B cell (primary cell): ENCODE measurements at regions of chr16 and their contacts with region 1.

Region 1: DNA sequence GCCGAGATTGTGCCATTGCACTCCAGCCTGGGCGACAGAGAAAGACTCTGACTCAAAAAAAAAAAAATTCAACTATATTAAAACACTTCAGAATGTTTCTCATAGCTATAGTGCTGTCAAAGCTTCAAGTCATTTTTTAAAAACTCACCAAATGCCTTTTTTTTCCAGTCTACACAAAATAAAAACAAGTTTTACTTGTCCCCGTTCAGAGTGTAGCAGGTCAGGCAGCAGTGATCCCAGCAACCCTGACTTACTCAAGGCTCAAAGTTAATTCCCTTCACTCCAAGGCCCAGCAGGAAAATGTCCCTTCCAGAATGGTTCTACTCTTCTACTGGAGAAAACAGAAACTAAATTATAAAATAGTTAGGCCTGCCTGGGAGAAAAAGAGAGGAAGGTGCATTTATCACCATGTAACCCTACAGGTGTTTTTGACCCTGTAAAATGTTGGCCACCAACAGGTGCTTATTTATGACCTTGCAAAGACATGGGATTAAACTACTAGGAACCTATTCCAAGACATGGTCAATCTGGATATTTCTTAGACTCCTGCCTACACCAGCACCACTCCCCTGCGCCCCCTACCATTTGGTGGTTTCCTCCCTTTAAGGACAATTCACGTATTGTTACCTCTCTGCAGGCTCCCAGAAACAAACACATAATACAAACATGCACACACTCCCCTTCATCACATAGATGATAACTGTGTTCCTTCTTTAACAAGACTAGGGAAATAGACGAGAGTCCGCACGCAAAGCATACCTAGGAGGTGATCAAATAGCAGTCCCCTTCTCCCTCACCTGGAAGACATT is 5.4 kb downstream of the AMFR start:
- DNase-seq: no peak
- ATAC-seq: no peak
- H3K4me3 ChIP-seq: peak overlapping the region in 1 of 5 experiments; percentile 78
- H3K4me3 Mint-ChIP-seq: peak overlapping the region; percentile 63
- H3K27ac ChIP-seq: peak overlapping the region; percentile 80 to 81
- H3K27ac Mint-ChIP-seq: peak overlapping the region; percentile 76
- H3K4me1 ChIP-seq: peaks cover 55 to 70% of the 10 kb centered on the region in 2 donors
- H3K4me1 Mint-ChIP-seq: peaks cover 64% of the 10 kb centered on the region
- H3K27me3 ChIP-seq: no peaks in the 10 kb centered on the region
- H3K27me3 Mint-ChIP-seq: no peaks in the 10 kb centered on the region
- CTCF ChIP-seq: no peak

Region 2: DNA sequence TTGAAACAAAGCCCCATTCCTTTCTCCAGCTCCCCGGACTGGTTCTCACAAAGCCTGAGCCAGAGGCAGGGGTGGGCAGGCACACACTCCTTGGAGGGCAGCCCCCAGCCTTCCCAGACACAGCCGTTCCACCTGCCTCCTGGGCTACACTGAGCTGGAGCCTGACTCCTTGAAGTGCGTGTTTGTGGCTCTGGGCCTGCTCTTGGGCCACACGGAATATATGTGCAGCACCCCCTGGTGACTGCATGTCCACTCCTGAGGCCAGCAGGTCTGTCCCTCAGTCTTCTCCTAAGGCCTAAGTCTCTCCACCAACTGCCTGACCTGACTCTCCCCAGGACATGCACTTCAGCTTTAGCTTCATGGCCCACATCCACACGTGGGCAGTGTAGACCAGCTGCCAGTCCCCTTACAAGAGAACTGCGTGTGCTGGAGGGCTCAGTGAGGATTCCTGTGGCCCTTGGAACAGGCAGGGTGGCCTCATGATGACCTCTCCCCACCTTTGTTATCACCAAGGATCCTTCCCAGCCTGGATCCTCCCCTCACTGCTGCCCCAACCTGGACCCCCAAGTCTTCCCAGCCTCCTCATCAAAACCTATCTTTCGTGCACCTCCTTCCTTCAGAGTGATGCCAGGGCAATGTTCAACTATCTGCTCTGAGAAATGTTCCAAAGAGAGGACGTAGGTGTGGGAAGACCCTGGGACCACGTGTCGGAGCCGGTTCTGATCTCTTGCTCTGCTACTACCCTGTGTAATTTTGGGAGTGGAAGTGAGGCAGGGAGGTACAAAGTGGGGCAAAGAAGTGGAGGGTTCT is 776.6 kb before region 1 on chr16:
- CTCF ChIA-PET with region 1: no interaction called
- POLR2A ChIA-PET with region 1: no interaction called
- intact Hi-C with region 1: no loop called
- DNase-seq: no peak
- ATAC-seq: no peak
- H3K4me3 ChIP-seq: no peak overlapping the region
- H3K4me3 Mint-ChIP-seq: no peak overlapping the region
- H3K27ac ChIP-seq: no peak overlapping the region
- H3K27ac Mint-ChIP-seq: no peak overlapping the region
- H3K4me1 ChIP-seq: no peaks in the 10 kb centered on the region
- H3K4me1 Mint-ChIP-seq: no peaks in the 10 kb centered on the region
- H3K27me3 ChIP-seq: no peaks in the 10 kb centered on the region
- H3K27me3 Mint-ChIP-seq: peaks cover 12% of the 10 kb centered on the region
- CTCF ChIP-seq: no peak

Region 3: DNA sequence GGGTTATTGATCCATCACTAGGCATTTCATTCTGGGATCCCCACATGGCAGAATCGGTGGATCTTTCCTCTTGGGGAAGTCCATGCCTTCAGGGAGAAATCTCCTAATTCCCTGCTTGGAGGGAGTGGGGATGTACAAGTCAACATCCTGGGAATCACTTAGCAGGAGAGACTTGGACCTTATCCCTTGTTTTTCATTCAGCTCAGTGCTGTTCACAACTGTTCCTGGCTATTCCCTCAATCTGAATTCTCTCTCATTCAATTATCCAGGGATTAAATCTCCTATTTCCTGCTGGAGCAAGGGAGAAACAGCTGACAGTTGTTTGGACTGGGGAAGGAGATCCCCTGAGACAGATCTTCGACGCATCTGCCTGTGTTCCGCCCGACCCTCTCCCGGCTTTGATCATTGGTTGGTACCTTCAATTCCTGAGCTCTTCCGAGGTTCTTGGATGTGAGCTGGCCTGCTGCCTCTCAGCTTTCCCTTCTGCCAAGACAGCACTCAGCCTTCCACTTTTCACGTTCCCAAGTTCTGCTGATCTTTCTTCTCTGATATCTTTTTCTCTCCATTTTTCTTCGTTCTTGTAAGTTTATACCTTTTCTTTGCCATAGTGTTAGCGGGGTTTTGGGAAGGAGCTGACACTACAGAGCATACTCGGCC is 344.1 kb before region 1 on chr16:
- CTCF ChIA-PET with region 1: no interaction called
- POLR2A ChIA-PET with region 1: interaction called, 10 read pairs
- intact Hi-C with region 1: no loop called
- DNase-seq: no peak
- ATAC-seq: no peak
- H3K4me3 ChIP-seq: no peak overlapping the region
- H3K4me3 Mint-ChIP-seq: no peak overlapping the region
- H3K27ac ChIP-seq: no peak overlapping the region
- H3K27ac Mint-ChIP-seq: no peak overlapping the region
- H3K4me1 ChIP-seq: no peaks in the 10 kb centered on the region
- H3K4me1 Mint-ChIP-seq: no peaks in the 10 kb centered on the region
- H3K27me3 ChIP-seq: peaks cover 0 to 4% (median 0%) of the 10 kb centered on the region in 4 experiments
- H3K27me3 Mint-ChIP-seq: peaks cover 15% of the 10 kb centered on the region
- CTCF ChIP-seq: no peak

Region 4: GRCh38 chr16:56145369-56145768 is 274.6 kb before region 1 on chr16:
- CTCF ChIA-PET with region 1: no interaction called
- POLR2A ChIA-PET with region 1: no interaction called
- intact Hi-C with region 1: no loop called
- DNase-seq: no peak
- ATAC-seq: no peak
- H3K4me3 ChIP-seq: no peak overlapping the region
- H3K4me3 Mint-ChIP-seq: no peak overlapping the region
- H3K27ac ChIP-seq: no peak overlapping the region
- H3K27ac Mint-ChIP-seq: no peak overlapping the region
- H3K4me1 ChIP-seq: no peaks in the 10 kb centered on the region
- H3K4me1 Mint-ChIP-seq: no peaks in the 10 kb centered on the region
- H3K27me3 ChIP-seq: peaks cover 0 to 7% (median 0%) of the 10 kb centered on the region in 4 experiments
- H3K27me3 Mint-ChIP-seq: peaks cover 39% of the 10 kb centered on the region
- CTCF ChIP-seq: no peak

Region 5: GRCh38 chr16:56767024-56767423 is 347.1 kb after region 1 on chr16:
- CTCF ChIA-PET with region 1: no interaction called
- POLR2A ChIA-PET with region 1: no interaction called
- intact Hi-C with region 1: no loop called
- DNase-seq: no peak
- ATAC-seq: no peak
- H3K4me3 ChIP-seq: no peak overlapping the region
- H3K4me3 Mint-ChIP-seq: no peak overlapping the region
- H3K27ac ChIP-seq: no peak overlapping the region
- H3K27ac Mint-ChIP-seq: no peak overlapping the region
- H3K4me1 ChIP-seq: peaks cover 0 to 6% of the 10 kb centered on the region in 2 donors
- H3K4me1 Mint-ChIP-seq: peaks cover 10% of the 10 kb centered on the region
- H3K27me3 ChIP-seq: no peaks in the 10 kb centered on the region
- H3K27me3 Mint-ChIP-seq: no peaks in the 10 kb centered on the region
- CTCF ChIP-seq: no peak